ENCODE measurements at regions of chr12 and their contacts with region 1.

Region 1: DNA sequence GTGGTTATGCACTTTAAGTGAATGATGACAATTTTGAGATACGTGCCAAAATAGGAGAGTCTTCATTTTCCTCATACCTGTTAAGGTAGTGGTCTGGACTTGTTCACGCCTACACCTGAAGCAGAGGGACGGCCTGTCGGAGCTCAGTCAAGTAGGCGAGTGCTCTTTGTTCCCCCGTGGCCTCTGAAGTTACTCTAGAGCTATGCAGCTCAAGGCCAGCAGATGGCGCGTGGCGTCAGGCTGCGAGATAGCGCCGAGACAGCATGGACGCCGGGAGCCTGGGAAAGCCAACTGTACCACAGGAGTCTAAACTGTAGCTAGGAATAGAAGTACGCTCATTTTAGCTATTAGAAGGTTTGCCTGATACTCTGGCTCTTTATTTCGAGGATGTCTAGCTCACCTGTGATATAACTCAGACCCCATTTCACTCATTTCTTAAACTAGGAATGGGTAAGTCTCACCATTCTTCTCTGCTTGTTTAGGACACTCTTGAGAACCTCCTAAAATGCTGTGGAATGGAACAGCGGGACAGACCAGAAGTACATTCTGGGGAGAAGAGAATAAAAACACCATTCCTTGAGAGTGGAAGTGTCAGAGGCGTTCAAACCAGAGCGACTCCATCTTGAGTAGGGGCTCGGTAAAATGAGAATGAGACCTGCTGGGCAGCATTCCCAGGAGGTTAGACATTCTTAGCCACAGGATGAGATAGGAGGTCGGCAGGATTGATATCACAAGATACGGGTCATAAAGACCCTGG is 267.4 kb upstream of the HMGA2 start:
- DNase-seq: peak; percentile 22 to 69 (median 40)
- ATAC-seq: peak; percentile 82
- H3K4me3 ChIP-seq: no peak overlapping the region
- H3K4me3 Mint-ChIP-seq: no peak overlapping the region
- H3K27ac ChIP-seq: no peak overlapping the region
- H3K27ac Mint-ChIP-seq: no peak overlapping the region
- H3K4me1 ChIP-seq: peaks cover 5% of the 10 kb centered on the region
- H3K4me1 Mint-ChIP-seq: no peaks in the 10 kb centered on the region
- H3K27me3 ChIP-seq: peaks cover 0 to 4% of the 10 kb centered on the region in 2 experiments
- H3K27me3 Mint-ChIP-seq: peaks cover 19% of the 10 kb centered on the region
- CTCF ChIP-seq: peak; percentile 70

Region 2: DNA sequence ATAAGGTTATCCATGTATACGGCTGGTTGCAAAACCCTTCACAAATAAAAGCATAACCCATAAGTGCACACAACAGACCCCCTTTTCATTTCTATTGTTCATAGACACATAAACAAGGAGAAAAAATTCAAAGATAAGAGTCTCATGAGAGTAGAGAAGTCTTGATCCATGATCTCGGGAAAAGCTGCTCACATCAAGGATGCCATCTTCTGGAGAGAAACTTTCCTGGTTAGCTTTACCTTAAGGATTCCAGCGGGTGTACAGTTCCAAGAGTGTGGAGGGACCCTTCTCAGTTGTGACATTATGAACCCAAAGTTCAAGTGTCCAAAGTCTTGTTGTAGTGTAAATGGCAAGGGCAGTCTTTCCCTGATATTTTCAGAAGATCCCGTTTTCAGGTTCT is 429.2 kb after region 1 on chr12:
- CTCF ChIA-PET with region 1: no interaction called
- POLR2A ChIA-PET with region 1: no interaction called
- intact Hi-C with region 1: loop called (anchors 2 to 5 kb)
- DNase-seq: no peak
- ATAC-seq: no peak
- H3K4me3 ChIP-seq: no peak overlapping the region
- H3K4me3 Mint-ChIP-seq: no peak overlapping the region
- H3K27ac ChIP-seq: no peak overlapping the region
- H3K27ac Mint-ChIP-seq: no peak overlapping the region
- H3K4me1 ChIP-seq: no peaks in the 10 kb centered on the region
- H3K4me1 Mint-ChIP-seq: no peaks in the 10 kb centered on the region
- H3K27me3 ChIP-seq: peaks cover 0 to 4% of the 10 kb centered on the region in 2 experiments
- H3K27me3 Mint-ChIP-seq: peaks cover 11% of the 10 kb centered on the region
- CTCF ChIP-seq: no peak

Region 3: DNA sequence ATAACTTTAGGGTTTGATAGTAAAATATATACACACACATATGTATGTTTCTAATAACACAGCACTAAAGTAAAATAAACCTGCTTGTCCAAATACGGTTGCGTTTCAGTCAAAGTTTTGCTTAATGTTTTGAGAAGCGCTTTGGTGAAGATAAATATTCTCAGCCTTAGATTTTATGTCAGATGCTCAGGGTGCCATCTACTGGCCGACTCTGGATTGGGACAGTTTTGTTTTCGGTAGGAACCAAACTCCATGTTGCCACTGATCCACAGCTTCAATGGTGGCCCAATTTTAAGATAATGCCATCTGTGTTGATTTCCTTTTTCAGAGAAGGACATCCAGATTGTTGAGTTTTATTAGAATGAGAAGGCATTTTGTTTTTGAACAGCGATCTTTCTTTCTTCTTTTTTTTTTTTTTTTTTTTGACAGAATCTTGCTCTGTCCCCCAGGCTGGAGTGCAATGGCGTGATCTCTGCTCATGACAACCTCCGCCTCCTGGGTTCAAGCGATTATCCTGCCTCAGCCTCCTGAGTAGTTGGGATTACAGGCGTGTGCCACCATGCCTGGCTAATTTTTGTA is 530.6 kb after region 1 on chr12:
- CTCF ChIA-PET with region 1: no interaction called
- POLR2A ChIA-PET with region 1: no interaction called
- intact Hi-C with region 1: loop called in 1 of 2 experiments (anchors 1 kb)
- DNase-seq: peak in 13 of 14 experiments; percentile 12 to 65 (median 34)
- ATAC-seq: peak; percentile 61
- H3K4me3 ChIP-seq: no peak overlapping the region
- H3K4me3 Mint-ChIP-seq: no peak overlapping the region
- H3K27ac ChIP-seq: no peak overlapping the region
- H3K27ac Mint-ChIP-seq: no peak overlapping the region
- H3K4me1 ChIP-seq: no peaks in the 10 kb centered on the region
- H3K4me1 Mint-ChIP-seq: no peaks in the 10 kb centered on the region
- H3K27me3 ChIP-seq: peaks cover 2 to 9% of the 10 kb centered on the region in 2 experiments
- H3K27me3 Mint-ChIP-seq: peaks cover 36% of the 10 kb centered on the region
- CTCF ChIP-seq: peak; percentile 71

Region 4: DNA sequence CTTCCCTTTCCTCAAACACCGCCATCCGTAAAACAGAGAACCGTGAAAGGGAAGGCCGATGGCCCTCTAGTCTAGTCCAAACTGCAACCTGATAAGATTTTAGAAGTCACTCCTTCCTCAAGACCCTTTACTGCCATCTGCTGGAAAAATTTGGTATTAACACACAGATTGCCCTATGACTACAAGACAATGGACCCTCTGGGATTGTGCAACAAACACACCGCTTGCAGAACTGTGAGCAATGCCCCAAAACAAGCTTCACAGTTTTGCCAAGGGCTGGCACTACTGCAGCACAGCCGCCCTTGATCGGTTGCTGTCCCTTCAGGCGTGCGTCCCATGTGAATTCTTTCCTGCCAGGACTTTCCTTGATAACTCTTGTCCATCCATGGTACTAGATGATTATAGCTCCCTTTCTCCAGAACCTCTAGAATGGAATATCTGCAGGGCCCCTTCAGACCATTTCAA is 550.6 kb after region 1 on chr12:
- CTCF ChIA-PET with region 1: no interaction called
- POLR2A ChIA-PET with region 1: no interaction called
- intact Hi-C with region 1: loop called in 1 of 2 experiments (anchors 5 kb)
- DNase-seq: peak in 10 of 14 experiments; percentile 7 to 85 (median 38)
- ATAC-seq: peak; percentile 91
- H3K4me3 ChIP-seq: no peak overlapping the region
- H3K4me3 Mint-ChIP-seq: no peak overlapping the region
- H3K27ac ChIP-seq: no peak overlapping the region
- H3K27ac Mint-ChIP-seq: no peak overlapping the region
- H3K4me1 ChIP-seq: peaks cover 4% of the 10 kb centered on the region
- H3K4me1 Mint-ChIP-seq: peaks cover 5% of the 10 kb centered on the region
- H3K27me3 ChIP-seq: peaks cover 0 to 3% of the 10 kb centered on the region in 2 experiments
- H3K27me3 Mint-ChIP-seq: peaks cover 28% of the 10 kb centered on the region
- CTCF ChIP-seq: peak; percentile 85